ENCODE measurements at regions of chr11 and their contacts with region 1.

Region 1: GRCh38 chr11:60831143-60831500 is 10.8 kb upstream of the CCDC86 start:
- DNase-seq: peak; percentile 83
- ATAC-seq: peak; percentile 95
- H3K4me3 Mint-ChIP-seq: peak overlapping the region; percentile 22; the same call in 1 of the 2 replicates
- H3K27ac Mint-ChIP-seq: no peak overlapping the region
- H3K4me1 Mint-ChIP-seq: no peaks in the 10 kb centered on the region
- H3K27me3 Mint-ChIP-seq: peaks cover 11% of the 10 kb centered on the region
- CTCF ChIP-seq: peak; percentile 90

Region 2: GRCh38 chr11:60775420-60775961 is 55.6 kb before region 1 on chr11:
- CTCF ChIA-PET with region 1: interaction called, 24 read pairs
- POLR2A ChIA-PET with region 1: no interaction called
- DNase-seq: peak; percentile 93
- ATAC-seq: peak; percentile 99
- H3K4me3 Mint-ChIP-seq: no peak overlapping the region
- H3K27ac Mint-ChIP-seq: no peak overlapping the region
- H3K4me1 Mint-ChIP-seq: peaks cover 7% of the 10 kb centered on the region
- H3K27me3 Mint-ChIP-seq: peaks cover 5% of the 10 kb centered on the region; the same call in 1 of the 2 replicates
- CTCF ChIP-seq: peak; percentile 89

Region 3: DNA sequence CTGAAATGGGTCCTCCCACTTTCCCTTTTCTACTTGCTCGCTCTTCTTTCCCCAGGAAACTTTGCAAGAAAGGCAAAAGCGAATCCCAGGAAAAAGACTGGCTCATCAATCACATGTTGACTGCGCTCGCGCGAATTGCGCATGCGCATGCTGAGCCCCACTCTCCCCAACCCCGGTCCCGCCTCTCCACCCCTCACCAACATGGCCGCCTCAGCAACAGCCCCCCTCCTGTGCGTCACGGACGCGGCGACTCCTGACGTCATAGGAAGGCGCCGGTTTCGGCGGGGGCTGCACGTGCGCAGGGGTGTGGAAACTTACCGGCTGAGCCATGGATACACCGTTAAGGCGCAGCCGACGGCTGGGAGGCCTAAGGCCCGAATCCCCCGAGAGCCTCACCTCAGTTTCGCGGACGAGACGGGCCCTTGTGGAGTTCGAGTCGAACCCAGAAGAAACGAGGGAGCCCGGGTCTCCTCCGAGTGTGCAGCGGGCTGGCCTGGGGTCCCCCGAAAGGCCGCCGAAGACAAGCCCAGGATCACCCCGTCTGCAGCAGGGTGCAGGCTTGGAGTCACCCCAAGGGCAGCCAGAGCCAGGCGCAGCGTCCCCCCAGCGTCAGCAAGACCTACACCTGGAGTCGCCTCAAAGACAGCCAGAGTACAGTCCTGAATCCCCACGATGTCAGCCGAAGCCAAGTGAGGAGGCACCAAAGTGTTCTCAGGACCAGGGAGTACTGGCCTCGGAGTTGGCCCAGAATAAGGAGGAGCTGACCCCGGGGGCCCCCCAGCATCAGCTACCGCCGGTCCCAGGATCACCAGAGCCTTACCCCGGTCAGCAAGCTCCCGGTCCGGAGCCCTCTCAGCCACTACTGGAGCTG is 10.9 kb after region 1 on chr11 and contains the start of gene CCDC86:
- CTCF ChIA-PET with region 1: interaction called, 17 read pairs
- POLR2A ChIA-PET with region 1: no interaction called
- DNase-seq: peak; percentile 97
- ATAC-seq: peak; percentile 86
- H3K4me3 Mint-ChIP-seq: peak within 1 kb of the TSS; percentile 89
- H3K27ac Mint-ChIP-seq: peak within 1 kb of the TSS; percentile 99
- H3K4me1 Mint-ChIP-seq: peaks cover 33% of the 10 kb centered on the region
- H3K27me3 Mint-ChIP-seq: peaks cover 2% of the 10 kb centered on the region; the same call in 1 of the 2 replicates
- CTCF ChIP-seq: no peak
- total RNA-seq, gene CCDC86: 49.4 to 53.5 TPM (median 53.1 TPM) in 3 replicates

Region 4: GRCh38 chr11:60872961-60873524 is 41.9 kb after region 1 on chr11:
- CTCF ChIA-PET with region 1: interaction called, 24 read pairs
- POLR2A ChIA-PET with region 1: no interaction called
- DNase-seq: peak; percentile 54
- ATAC-seq: peak; percentile 70
- H3K4me3 Mint-ChIP-seq: no peak overlapping the region
- H3K27ac Mint-ChIP-seq: no peak overlapping the region
- H3K4me1 Mint-ChIP-seq: peaks cover 8% of the 10 kb centered on the region
- H3K27me3 Mint-ChIP-seq: no peaks in the 10 kb centered on the region
- CTCF ChIP-seq: no peak

Region 5: DNA sequence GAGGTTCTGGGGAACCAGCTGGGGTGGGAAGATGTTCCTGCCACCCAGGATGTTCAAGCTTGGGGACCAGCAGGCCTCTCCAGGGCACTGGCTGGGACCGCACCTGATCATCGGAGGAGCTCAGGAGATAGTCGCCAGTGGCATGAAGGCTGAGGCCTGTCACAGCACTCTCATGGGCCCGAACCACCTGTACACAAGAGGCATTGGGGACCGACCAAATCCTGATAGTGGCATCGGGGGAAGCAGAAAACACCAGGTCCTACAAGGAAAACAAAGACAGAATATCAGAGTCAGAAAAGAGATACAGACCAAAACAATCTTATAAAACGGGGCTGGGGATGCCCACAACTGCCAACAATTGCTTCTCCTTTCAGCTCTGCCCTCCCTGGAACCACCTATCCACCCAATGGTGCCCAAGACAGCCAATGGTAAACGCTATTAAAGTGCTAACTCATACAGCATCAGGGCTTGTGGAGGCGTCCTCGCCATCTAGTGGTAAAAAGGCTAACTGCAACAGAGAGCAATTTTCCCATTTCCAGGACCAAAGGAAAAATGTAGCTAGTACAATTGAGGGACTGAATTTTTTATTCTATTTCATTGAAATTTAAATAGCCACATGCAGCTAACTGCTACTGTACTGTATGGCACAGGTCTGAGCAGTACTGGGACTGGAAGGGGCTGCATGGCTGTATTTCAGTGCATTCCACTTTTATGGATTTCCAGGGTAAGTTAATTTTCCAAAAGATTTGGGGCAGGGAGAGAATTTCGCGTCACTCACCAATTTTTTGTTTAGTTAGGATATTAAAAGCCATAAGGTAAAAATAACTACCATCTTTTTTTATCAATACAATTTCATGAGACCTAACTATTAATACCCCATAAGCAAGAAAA is 68.2 kb after region 1 on chr11:
- CTCF ChIA-PET with region 1: interaction called, 43 read pairs
- POLR2A ChIA-PET with region 1: no interaction called
- DNase-seq: peak; percentile 38
- ATAC-seq: peak; percentile 79
- H3K4me3 Mint-ChIP-seq: no peak overlapping the region
- H3K27ac Mint-ChIP-seq: no peak overlapping the region; the same call in 1 of the 2 replicates
- H3K4me1 Mint-ChIP-seq: peaks cover 4% of the 10 kb centered on the region
- H3K27me3 Mint-ChIP-seq: no peaks in the 10 kb centered on the region
- CTCF ChIP-seq: peak; percentile 80

Region 6: DNA sequence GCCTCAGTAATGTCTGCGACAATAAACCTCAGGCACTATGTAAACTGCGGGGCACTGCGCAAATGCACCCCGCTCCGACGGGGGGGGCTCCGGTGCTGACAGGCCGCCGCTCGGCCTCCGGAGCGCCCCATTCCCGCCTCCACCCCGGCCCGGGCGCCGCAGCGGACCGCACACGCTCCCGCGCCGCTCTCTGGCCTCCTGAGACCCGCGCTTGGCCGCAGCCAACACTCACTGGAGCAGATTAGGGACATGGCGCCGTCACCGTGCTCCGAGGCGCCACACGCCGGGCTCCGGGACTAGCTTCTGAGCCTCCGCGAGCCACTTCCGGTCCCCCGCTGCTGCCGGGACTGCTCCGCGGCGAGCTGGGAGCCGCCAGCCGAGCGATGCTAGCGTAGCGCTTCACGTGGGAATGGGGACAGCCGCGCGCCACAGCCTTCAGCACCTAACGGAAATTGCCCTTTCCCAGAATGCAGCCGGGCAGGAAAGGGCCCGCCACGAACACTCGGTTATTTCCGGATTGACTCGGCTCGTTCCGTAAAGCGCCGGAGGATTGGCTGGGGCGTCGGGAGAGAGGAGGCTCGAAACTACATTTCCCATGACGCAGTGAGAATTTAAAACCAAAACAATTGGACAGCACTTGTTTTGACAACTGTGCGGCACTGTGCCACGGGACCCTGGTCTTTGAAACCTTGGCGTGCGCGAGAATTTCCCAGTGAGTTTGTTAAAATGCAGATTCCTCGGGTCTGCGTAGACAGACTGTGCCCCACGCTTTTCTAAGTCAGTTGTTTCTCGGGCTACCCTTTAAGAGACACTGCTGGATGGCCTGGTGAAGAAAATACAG is 75.2 kb after region 1 on chr11 and contains the start of gene PRPF19:
- CTCF ChIA-PET with region 1: interaction called, 12 read pairs
- POLR2A ChIA-PET with region 1: no interaction called
- DNase-seq: peak; percentile 99
- ATAC-seq: peak; percentile 97
- H3K4me3 Mint-ChIP-seq: peak within 1 kb of the TSS; percentile 88
- H3K27ac Mint-ChIP-seq: peak within 1 kb of the TSS; percentile 98
- H3K4me1 Mint-ChIP-seq: peaks cover 18% of the 10 kb centered on the region
- H3K27me3 Mint-ChIP-seq: peaks cover 31% of the 10 kb centered on the region
- CTCF ChIP-seq: no peak
- total RNA-seq, gene PRPF19: 103 to 116 TPM (median 105 TPM) in 3 replicates

Region 7: GRCh38 chr11:60957188-60957587 is 126.1 kb after region 1 on chr11:
- CTCF ChIA-PET with region 1: no interaction called
- POLR2A ChIA-PET with region 1: no interaction called
- DNase-seq: no peak
- ATAC-seq: no peak
- H3K4me3 Mint-ChIP-seq: no peak overlapping the region
- H3K27ac Mint-ChIP-seq: no peak overlapping the region
- H3K4me1 Mint-ChIP-seq: peaks cover 8% of the 10 kb centered on the region
- H3K27me3 Mint-ChIP-seq: peaks cover 25% of the 10 kb centered on the region
- CTCF ChIP-seq: no peak

Region 8: GRCh38 chr11:61161190-61162091 is 330.3 kb after region 1 on chr11 and contains the start of gene VPS37C:
- CTCF ChIA-PET with region 1: no interaction called
- POLR2A ChIA-PET with region 1: no interaction called
- DNase-seq: peak; percentile 88
- ATAC-seq: peak; percentile 88
- H3K4me3 Mint-ChIP-seq: peak within 1 kb of the TSS; percentile 86
- H3K27ac Mint-ChIP-seq: peak within 1 kb of the TSS; percentile 92
- H3K4me1 Mint-ChIP-seq: peaks cover 46% of the 10 kb centered on the region
- H3K27me3 Mint-ChIP-seq: no peaks in the 10 kb centered on the region
- CTCF ChIP-seq: 0 out of 2 replicates have a peak, but pooled peaks have one; percentile 17
- total RNA-seq, gene VPS37C: 22.2 to 23.9 TPM (median 23.4 TPM) in 3 replicates

Measured in WTC11 (cell line).